ENCODE measurements at regions of chr18 and their contacts with region 1.

Region 1: DNA sequence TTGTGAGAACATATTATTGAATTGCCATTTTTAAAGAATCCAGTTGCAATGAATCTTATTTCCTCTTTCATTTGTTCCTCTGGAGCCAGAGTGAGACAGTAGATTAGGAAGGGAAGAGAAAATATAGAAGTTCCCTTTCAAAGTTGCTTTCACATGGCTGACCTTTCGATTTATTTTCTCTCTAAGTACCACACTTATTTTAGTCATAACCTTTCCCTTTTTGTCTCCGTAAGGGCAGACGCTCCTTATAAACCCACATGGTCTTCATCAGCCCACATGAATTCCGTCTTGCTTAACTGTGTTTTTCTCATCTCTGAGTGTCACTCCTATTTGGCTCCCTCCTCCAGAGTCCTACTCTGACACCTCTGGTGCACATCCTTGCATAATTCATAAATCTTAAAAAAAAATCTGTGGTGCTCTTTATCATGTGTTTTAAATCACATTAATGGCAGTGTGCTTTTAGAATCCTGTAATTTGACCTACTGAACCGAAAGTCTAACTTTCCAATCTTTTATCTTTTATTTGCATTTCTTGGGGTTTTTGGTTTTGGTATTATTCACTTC is 38.5 kb upstream of the ZNF396 start:
- DNase-seq: no peak
- H3K4me3 ChIP-seq: no peak overlapping the region
- H3K27ac ChIP-seq: no peak overlapping the region
- H3K4me1 ChIP-seq: no peaks in the 10 kb centered on the region
- H3K27me3 ChIP-seq: no peaks in the 10 kb centered on the region
- CTCF ChIP-seq: no peak
- POLR2A ChIP-seq: no peak

Region 2: DNA sequence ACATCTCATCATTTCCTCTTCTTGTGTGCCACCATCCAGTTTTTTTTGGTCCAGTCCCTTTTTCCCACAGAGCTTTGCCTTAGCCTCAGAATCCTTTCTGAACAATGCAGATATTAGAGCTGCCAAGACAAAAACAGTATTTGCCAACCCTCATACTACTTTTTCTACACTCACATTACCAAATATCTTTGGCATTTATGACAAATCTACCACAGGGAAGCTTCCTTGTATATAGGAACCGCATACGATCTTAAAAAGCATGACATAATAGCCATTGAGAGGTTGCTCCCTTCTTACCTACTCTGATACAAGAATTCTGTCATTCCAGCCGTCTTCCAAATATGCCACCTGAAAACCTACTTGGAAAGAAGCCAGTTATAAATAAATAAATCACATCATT is 80.8 kb before region 1 on chr18:
- intact Hi-C with region 1: no loop called
- DNase-seq: no peak
- H3K4me3 ChIP-seq: no peak overlapping the region
- H3K27ac ChIP-seq: peak overlapping the region in 1 of 2 donors; percentile 50
- H3K4me1 ChIP-seq: peaks cover 0 to 6% of the 10 kb centered on the region in 2 donors
- H3K27me3 ChIP-seq: no peaks in the 10 kb centered on the region
- CTCF ChIP-seq: no peak
- POLR2A ChIP-seq: no peak

Region 3: DNA sequence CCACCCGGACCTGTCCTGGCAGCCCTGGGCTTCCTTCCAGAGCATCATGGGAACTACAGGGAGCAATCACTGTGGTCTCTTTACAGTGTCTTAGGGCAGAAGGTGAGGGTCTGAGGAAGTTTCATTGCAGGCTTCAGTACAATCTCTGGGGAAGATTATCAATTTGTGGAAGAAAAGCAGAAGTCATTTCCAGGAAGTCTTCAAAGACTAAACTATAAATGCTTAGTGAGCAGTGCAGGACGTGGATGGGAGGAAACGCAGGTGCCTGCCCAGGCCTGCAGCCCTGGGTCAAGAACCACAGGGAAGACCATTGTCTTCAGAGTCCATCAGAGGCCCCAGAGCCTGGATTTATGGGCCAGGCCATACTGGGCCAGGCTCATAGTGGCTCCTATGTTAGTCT is 27.8 kb after region 1 on chr18:
- intact Hi-C with region 1: loop called (anchors 1 kb)
- DNase-seq: no peak
- H3K4me3 ChIP-seq: no peak overlapping the region
- H3K27ac ChIP-seq: no peak overlapping the region
- H3K4me1 ChIP-seq: no peaks in the 10 kb centered on the region
- H3K27me3 ChIP-seq: no peaks in the 10 kb centered on the region
- CTCF ChIP-seq: no peak
- POLR2A ChIP-seq: no peak

Region 4: DNA sequence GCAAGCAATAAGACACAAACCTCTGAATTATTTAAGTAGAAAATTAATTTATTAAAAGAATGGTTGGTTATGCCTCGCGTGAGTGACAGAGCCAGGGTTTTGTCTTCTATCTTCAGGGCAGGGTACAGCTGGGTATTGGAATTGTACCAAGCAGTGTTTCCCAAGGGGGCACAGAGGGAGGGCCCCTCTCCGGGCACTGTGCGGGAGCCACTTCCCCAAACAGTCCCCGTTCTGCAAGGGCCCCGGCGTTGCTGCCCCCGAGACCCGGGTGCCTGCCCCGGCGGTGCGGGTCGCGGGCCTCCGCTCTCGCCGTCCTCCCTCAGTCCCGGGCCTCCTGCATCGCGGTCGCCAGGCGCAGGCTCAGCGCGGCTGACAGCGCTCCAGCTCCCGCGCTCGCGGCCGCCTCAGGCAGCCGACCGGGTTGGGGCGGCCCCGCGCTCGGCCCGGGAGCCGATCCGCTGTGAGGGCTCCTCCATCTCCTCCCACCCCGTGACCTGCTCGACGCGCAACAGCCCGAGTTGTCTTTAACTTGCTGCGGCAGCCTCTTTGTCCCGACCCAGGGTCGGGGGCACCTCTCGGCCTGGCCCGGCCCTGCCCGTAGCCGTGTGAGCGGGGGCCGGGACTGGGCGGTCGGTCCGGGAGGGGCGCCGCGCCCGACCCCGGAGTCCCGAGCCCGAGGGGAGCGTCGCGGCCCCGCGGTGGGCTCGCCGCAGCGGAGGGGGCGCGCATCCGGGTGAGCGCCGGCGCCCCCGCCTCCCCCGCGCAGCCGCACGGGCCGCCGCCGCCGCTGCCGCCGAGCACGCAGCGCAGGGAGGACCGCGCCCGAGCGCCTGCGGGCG is 165.3 kb after region 1 on chr18:
- intact Hi-C with region 1: loop called (anchors 10 kb)
- DNase-seq: peak; percentile 28 to 52
- H3K4me3 ChIP-seq: peak overlapping the region; percentile 72 to 99 (median 79)
- H3K27ac ChIP-seq: peak overlapping the region; percentile 93 to 98
- H3K4me1 ChIP-seq: peaks cover 0 to 7% of the 10 kb centered on the region in 2 donors
- H3K27me3 ChIP-seq: no peaks in the 10 kb centered on the region
- CTCF ChIP-seq: no peak
- POLR2A ChIP-seq: no peak